ENCODE measurements at regions of chr17 and their contacts with region 1.

Region 1: DNA sequence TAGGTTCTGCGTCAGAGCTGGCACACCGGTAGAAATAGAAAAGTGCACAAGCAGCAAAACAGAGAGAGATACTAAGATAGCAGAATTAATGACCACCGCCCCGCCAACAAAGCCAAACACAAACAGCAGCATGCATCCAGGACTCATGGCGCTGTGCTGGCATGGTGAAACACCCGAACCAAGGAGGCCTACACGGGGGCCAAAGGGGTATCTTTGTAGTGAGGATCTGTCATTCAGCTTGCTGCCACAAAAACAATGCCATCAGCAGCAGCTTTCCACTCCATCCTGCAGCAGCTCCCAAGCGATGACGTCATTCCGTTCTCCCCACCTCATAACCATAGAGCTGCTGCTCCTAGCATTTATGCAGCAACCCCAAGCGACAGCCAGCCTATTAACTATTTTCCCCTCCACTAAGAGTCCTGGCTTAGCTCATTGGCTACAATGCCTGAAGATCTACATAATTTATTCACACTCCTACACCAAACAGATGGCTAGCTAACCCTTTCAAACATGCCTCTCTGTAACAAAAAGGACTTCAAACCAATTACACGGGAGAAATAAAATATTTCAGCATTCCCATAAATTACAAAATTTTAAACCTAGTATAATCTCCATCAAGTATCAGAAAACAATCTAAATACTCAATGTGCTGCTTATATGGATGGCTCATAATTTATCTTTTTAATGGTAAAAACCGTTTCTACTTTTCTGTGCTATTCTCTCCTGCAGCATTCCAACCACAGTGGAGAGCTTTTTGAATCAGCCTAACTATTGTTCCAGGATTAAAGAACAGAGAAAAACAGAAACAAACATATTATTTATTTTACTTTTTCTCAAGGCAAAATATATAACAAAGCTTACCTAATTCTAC is 73.9 kb downstream of the SPAG9 start:
- DNase-seq: peak; percentile 74
- ATAC-seq: peak; percentile 98
- H3K4me3 Mint-ChIP-seq: no peak overlapping the region
- H3K27ac Mint-ChIP-seq: no peak overlapping the region
- H3K4me1 Mint-ChIP-seq: peaks cover 10% of the 10 kb centered on the region
- H3K27me3 Mint-ChIP-seq: no peaks in the 10 kb centered on the region
- CTCF ChIP-seq: no peak

Region 2: GRCh38 chr17:50919321-50920085 is 127.2 kb before region 1 on chr17:
- CTCF ChIA-PET with region 1: no interaction called
- POLR2A ChIA-PET with region 1: no interaction called
- DNase-seq: peak; percentile 75
- ATAC-seq: peak; percentile 84
- H3K4me3 Mint-ChIP-seq: no peak overlapping the region
- H3K27ac Mint-ChIP-seq: no peak overlapping the region
- H3K4me1 Mint-ChIP-seq: peaks cover 57% of the 10 kb centered on the region
- H3K27me3 Mint-ChIP-seq: no peaks in the 10 kb centered on the region; the same call in 1 of the 2 replicates
- CTCF ChIP-seq: no peak

Region 3: DNA sequence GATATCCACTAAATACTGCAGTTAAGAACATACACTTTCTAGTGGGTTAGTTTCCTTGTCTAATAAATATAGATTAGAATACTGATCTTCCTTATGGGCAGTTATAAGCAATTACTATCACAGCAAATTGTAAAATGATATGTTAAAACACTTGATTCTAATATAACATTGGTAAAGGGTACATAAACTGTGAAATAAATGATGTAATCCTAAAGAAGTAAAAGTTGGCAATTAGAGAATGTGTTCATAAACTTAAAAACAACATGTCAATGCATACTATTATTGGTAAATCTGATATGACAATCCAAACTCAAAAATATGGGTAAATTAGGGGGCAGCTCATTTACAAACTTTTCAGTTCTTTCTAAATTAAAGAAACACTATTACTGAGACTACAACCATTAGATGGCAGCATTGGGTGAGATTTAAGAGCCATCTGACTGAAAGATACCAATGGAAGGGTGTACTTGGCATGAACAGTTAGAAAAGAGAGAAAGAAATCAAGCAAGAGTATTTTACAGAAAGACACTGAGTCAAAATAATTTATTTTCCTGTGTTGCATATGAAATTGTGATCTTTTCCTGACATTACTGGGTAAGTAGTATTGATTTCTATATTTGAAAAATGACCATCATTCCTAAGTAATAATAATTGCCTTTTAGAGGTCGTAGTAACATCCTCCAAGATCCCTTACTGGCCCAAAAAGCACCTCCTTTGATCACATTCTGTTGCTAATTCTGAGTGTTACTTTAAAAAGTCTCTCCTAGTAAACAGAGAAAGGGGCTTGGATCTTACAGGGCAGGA is 45.7 kb before region 1 on chr17:
- CTCF ChIA-PET with region 1: interaction called, 16 read pairs
- POLR2A ChIA-PET with region 1: no interaction called
- DNase-seq: no peak
- ATAC-seq: peak; percentile 59
- H3K4me3 Mint-ChIP-seq: no peak overlapping the region
- H3K27ac Mint-ChIP-seq: no peak overlapping the region
- H3K4me1 Mint-ChIP-seq: no peaks in the 10 kb centered on the region
- H3K27me3 Mint-ChIP-seq: no peaks in the 10 kb centered on the region
- CTCF ChIP-seq: no peak

Measured in WTC11 (cell line).